Heart left ventricle (tissue), 16 donors: ENCODE measurements at regions of chr12 and their contacts with region 1.

Region 1: GRCh38 chr12:69991341-69992288 is 166.6 kb downstream of the MYRFL start:
- DNase-seq: no peak
- ATAC-seq: peak in 1 of 4 donors; percentile 21
- H3K4me3 ChIP-seq: no peak overlapping the region
- H3K27ac ChIP-seq: no peak overlapping the region
- H3K4me1 ChIP-seq: peaks cover 0 to 21% (median 10%) of the 10 kb centered on the region in 12 donors
- H3K27me3 ChIP-seq: no peaks in the 10 kb centered on the region
- CTCF ChIP-seq: no peak
- POLR2A ChIP-seq: no peak

Region 2: DNA sequence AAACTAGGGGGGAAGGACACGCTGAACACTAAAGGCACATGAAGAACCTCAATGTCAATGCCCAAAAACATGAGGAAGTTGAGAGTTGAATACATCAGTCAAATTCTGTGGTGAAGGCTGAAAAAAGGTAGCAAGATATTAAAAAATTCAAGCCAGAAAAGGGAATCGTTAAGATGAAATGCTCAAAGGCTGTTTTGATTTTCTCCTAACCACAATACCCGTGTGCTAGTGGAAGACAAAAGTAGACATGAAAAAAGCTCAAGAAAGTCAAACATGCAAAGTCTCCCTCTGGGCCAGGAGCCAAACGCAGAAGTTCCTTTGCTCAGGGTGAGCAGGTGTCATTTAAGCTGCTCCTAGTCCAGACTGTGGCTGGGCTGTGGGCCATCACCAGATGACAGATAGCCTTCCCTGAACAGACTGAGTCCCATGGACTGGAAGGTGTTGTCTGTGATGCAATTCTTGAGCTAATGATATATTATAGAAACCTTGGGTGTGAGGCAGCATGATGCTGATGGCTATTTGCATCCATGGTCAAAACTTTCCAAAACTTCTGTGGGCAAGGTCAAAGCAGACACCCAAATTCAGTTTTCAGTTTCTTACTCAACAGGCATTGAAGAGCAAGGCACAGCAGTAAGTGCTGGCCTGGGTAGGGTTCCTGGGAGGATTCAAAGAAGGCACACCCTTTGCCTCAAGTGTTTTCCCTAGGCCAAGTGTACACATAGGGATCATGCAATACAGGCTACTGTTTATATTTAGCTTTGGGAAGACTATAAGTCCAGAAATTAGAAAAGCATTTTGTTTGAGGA is 85.0 kb before region 1 on chr12:
- intact Hi-C with region 1: loop called in 2 of 10 experiments (anchors 5 kb)
- DNase-seq: no peak
- ATAC-seq: peak in 1 of 4 donors; percentile 27
- H3K4me3 ChIP-seq: no peak overlapping the region
- H3K27ac ChIP-seq: no peak overlapping the region
- H3K4me1 ChIP-seq: peaks cover 0 to 21% (median 0%) of the 10 kb centered on the region in 12 donors
- H3K27me3 ChIP-seq: no peaks in the 10 kb centered on the region
- CTCF ChIP-seq: no peak
- POLR2A ChIP-seq: no peak